Activated CD4-positive, alpha-beta T cell treated with anti-CD3 and anti-CD28 coated beads for 36 hours (primary cell): ENCODE measurements at regions of chr3 and their contacts with region 1.

Region 1: GRCh38 chr3:100590114-100590839 is 19.1 kb upstream of the ADGRG7 start:
- DNase-seq: peak; percentile 72
- ATAC-seq: peak; percentile 87
- H3K4me3 Mint-ChIP-seq: no peak overlapping the region
- H3K27ac Mint-ChIP-seq: no peak overlapping the region
- H3K4me1 Mint-ChIP-seq: peaks cover 3% of the 10 kb centered on the region
- H3K27me3 Mint-ChIP-seq: no peaks in the 10 kb centered on the region

Region 2: GRCh38 chr3:100068826-100069225 is 521.5 kb before region 1 on chr3:
- CTCF ChIA-PET with region 1: no interaction called
- POLR2A ChIA-PET with region 1: no interaction called
- intact Hi-C with region 1: loop called in 1 of 2 experiments (anchors 5 kb)
- DNase-seq: peak; percentile 90
- ATAC-seq: peak; percentile 87
- H3K4me3 Mint-ChIP-seq: no peak overlapping the region
- H3K27ac Mint-ChIP-seq: no peak overlapping the region
- H3K4me1 Mint-ChIP-seq: peaks cover 30% of the 10 kb centered on the region
- H3K27me3 Mint-ChIP-seq: no peaks in the 10 kb centered on the region

Region 3: GRCh38 chr3:100334488-100335351 is 255.6 kb before region 1 on chr3 and contains the start of gene NIT2:
- CTCF ChIA-PET with region 1: interaction called, 4 read pairs
- POLR2A ChIA-PET with region 1: no interaction called
- intact Hi-C with region 1: loop called in 1 of 2 experiments (anchors 5 kb)
- DNase-seq: peak; percentile 90
- ATAC-seq: peak; percentile 98
- H3K4me3 Mint-ChIP-seq: peak within 1 kb of the TSS; percentile 92
- H3K27ac Mint-ChIP-seq: peak within 1 kb of the TSS; percentile 96
- H3K4me1 Mint-ChIP-seq: peaks cover 24% of the 10 kb centered on the region
- H3K27me3 Mint-ChIP-seq: no peaks in the 10 kb centered on the region
- total RNA-seq, gene NIT2: 59.1 to 70.8 TPM

Region 4: DNA sequence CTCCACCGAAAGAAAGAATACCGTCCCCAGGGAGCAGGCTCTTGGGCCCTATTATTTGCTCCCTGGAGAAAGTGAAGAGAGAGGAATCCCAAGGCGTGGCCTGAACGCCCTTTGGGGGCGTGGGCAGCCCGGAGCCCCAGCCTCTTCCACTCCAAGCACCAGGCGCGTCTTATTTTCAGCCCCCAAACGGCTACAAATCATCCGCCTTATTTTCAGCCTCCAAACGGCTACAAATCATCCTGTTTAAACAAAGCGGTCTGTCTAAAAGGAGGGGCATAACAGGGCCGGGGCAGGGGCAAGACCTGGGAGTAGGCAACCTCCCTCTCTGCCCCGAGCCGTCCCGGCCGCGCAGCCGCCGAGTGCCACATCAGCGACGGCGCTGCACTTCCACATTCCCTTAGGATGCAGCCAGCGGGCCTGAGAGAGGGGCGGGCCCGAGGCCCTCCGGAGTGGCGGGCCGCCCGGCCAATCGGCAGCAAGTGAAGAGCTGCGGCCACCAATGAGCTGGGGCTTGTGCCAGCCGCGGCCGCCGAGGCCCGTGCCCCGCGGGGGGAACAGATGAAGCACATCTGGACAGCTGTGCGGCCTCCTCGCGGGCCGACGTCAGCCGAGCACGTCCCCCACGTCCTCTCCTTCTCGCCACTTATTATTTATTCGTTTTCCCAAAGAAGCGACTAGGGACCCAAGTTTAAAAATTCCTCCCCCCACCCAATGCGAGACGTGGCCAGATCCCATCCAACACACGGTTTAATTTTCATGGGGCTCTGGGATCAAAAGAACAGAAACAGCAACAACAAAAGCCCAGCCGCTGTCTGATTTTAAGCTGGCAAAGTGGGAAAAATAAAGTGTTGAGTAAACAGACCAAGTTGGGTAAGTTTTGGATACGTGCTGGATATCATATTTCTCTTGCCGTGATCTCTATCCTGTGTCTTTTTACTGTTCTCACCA is 97.9 kb before region 1 on chr3 and contains the start of gene TMEM45A:
- CTCF ChIA-PET with region 1: interaction called, 3 read pairs
- POLR2A ChIA-PET with region 1: no interaction called
- intact Hi-C with region 1: loop called in 1 of 2 experiments (anchors 1 kb)
- DNase-seq: peak; percentile 91
- ATAC-seq: peak; percentile 100
- H3K4me3 Mint-ChIP-seq: peak within 1 kb of the TSS; percentile 82
- H3K27ac Mint-ChIP-seq: peak within 1 kb of the TSS; percentile 77
- H3K4me1 Mint-ChIP-seq: peaks cover 6% of the 10 kb centered on the region
- H3K27me3 Mint-ChIP-seq: peaks cover 14% of the 10 kb centered on the region
- total RNA-seq, gene TMEM45A: 2.2 to 3.1 TPM

Region 5: GRCh38 chr3:100629421-100630127 is 39.3 kb after region 1 on chr3:
- CTCF ChIA-PET with region 1: no interaction called
- POLR2A ChIA-PET with region 1: no interaction called
- intact Hi-C with region 1: no loop called
- DNase-seq: no peak
- ATAC-seq: no peak
- H3K4me3 Mint-ChIP-seq: no peak overlapping the region
- H3K27ac Mint-ChIP-seq: no peak overlapping the region
- H3K4me1 Mint-ChIP-seq: no peaks in the 10 kb centered on the region
- H3K27me3 Mint-ChIP-seq: peaks cover 16% of the 10 kb centered on the region

Region 6: GRCh38 chr3:100650651-100651611 is 60.7 kb after region 1 on chr3:
- CTCF ChIA-PET with region 1: no interaction called
- POLR2A ChIA-PET with region 1: no interaction called
- intact Hi-C with region 1: no loop called
- DNase-seq: peak; percentile 44
- ATAC-seq: peak; percentile 100
- H3K4me3 Mint-ChIP-seq: peak overlapping the region; percentile 52
- H3K27ac Mint-ChIP-seq: peak overlapping the region; percentile 87
- H3K4me1 Mint-ChIP-seq: peaks cover 20% of the 10 kb centered on the region
- H3K27me3 Mint-ChIP-seq: no peaks in the 10 kb centered on the region

Region 7: GRCh38 chr3:101381809-101382208 is 791.5 kb after region 1 on chr3:
- CTCF ChIA-PET with region 1: no interaction called
- POLR2A ChIA-PET with region 1: no interaction called
- intact Hi-C with region 1: loop called in 1 of 2 experiments (anchors 10 kb)
- DNase-seq: no peak
- ATAC-seq: no peak
- H3K4me3 Mint-ChIP-seq: no peak overlapping the region
- H3K27ac Mint-ChIP-seq: no peak overlapping the region
- H3K4me1 Mint-ChIP-seq: peaks cover 60% of the 10 kb centered on the region
- H3K27me3 Mint-ChIP-seq: no peaks in the 10 kb centered on the region